K562 (cell line): ENCODE measurements at regions of chr20 and their contacts with region 1.

Region 1: GRCh38 chr20:57048027-57048869 is 218.2 kb downstream of the BMP7 start:
- DNase-seq: peak; percentile 66 to 81 (median 76)
- ATAC-seq: peak; percentile 95
- H3K4me3 ChIP-seq: no peak overlapping the region
- H3K27ac ChIP-seq: no peak overlapping the region
- H3K4me1 ChIP-seq: peaks cover 5% of the 10 kb centered on the region in 2 experiments; a peak in 4 of 5 replicates
- H3K27me3 ChIP-seq: peaks cover under 1 to 41% of the 10 kb centered on the region in 2 experiments; a peak in 4 of 5 replicates
- CTCF ChIP-seq: peak; percentile 77 to 89 (median 81)
- EP300 ChIP-seq: no peak
- POLR2A ChIP-seq: no peak
- RAD21 ChIP-seq: peak; percentile 26 to 51; a peak in 2 of 4 replicates

Region 2: GRCh38 chr20:56554869-56555268 is 493.4 kb before region 1 on chr20:
- CTCF ChIA-PET with region 1: interaction called, 3 read pairs
- POLR2A ChIA-PET with region 1: no interaction called
- in situ Hi-C with region 1: no loop called
- intact Hi-C with region 1: loop called (anchors 5 kb)
- DNase-seq: peak in 3 of 4 experiments; percentile 41 to 61 (median 54)
- ATAC-seq: no peak
- H3K4me3 ChIP-seq: no peak overlapping the region
- H3K27ac ChIP-seq: no peak overlapping the region
- H3K4me1 ChIP-seq: peaks cover 0 to 6% of the 10 kb centered on the region in 2 experiments; a peak in 1 of 5 replicates
- H3K27me3 ChIP-seq: peaks cover 8 to 33% of the 10 kb centered on the region in 2 experiments; a peak in 4 of 5 replicates
- CTCF ChIP-seq: no peak
- EP300 ChIP-seq: no peak
- POLR2A ChIP-seq: no peak
- RAD21 ChIP-seq: no peak

Region 3: GRCh38 chr20:56977441-56977840 is 70.8 kb before region 1 on chr20:
- CTCF ChIA-PET with region 1: no interaction called
- POLR2A ChIA-PET with region 1: no interaction called
- in situ Hi-C with region 1: no loop called
- intact Hi-C with region 1: loop called (anchors 2 kb)
- DNase-seq: no peak
- ATAC-seq: no peak
- H3K4me3 ChIP-seq: no peak overlapping the region
- H3K27ac ChIP-seq: no peak overlapping the region
- H3K4me1 ChIP-seq: no peaks in the 10 kb centered on the region
- H3K27me3 ChIP-seq: peaks cover 2 to 43% of the 10 kb centered on the region in 2 experiments; a peak in 4 of 5 replicates
- CTCF ChIP-seq: no peak
- EP300 ChIP-seq: no peak
- POLR2A ChIP-seq: no peak
- RAD21 ChIP-seq: no peak

Region 4: DNA sequence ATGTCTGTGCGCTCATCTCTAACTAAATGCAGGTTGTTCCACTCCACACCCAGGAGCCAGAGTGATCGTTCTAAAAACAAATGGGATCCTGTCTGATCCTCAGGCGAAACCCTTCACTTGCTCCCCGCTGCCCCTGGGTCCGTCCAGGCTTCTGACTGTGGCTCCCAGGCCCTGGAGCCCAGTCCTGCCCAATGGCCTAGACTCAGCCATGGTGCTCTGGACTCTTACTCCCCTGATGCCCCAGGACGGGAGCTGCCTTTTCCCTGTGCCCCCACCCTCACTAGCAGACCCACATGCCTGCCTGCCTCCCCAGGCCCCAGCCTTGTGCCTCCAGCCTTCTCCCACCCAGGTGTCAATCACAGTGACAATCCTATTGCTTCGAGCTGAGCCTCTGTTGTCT is 38.5 kb before region 1 on chr20:
- CTCF ChIA-PET with region 1: no interaction called
- POLR2A ChIA-PET with region 1: no interaction called
- in situ Hi-C with region 1: no loop called
- intact Hi-C with region 1: no loop called
- DNase-seq: no peak
- ATAC-seq: no peak
- H3K4me3 ChIP-seq: no peak overlapping the region
- H3K27ac ChIP-seq: no peak overlapping the region
- H3K4me1 ChIP-seq: peaks cover 0 to 4% of the 10 kb centered on the region in 2 experiments; a peak in 2 of 5 replicates
- H3K27me3 ChIP-seq: peaks cover 4 to 17% of the 10 kb centered on the region in 2 experiments; a peak in 4 of 5 replicates
- CTCF ChIP-seq: no peak
- EP300 ChIP-seq: no peak
- POLR2A ChIP-seq: no peak
- RAD21 ChIP-seq: no peak